ENCODE measurements at regions of chr11 and their contacts with region 1.

Region 1: DNA sequence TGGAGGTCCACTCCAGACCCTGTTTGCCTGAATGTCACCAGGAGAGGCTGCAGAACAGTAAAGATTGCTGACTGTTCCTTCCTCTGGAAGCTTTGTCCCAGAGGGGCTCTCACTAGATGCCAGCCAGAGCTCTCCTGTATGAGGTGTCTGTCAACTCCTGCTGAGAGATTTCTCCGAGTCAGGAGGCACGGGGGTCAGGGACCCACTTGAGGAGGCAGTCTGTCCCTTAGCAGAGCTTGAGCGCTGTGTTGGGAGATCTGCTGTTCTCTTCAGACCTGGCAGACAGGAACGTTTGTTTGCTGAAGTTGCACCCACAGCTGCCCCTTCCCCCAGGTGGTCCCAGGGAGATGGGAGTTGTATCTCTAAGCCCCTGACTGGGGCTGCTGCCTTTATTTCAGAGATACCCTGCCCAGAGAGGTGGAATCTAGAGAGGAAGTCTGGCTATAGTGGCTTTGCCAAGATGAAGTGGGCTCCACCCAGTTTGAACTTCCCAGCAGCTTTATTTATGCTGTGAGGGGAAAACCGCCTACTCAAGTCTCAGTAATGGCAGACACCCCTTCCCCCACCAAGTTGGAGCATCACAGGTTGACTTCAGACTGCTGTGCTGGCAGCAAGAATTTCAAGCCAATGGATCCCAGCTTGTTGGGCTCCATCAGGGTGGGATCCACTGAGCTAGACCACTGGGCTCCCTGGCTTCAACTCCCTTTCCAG is 99.4 kb downstream of the PDE3B start:
- DNase-seq: no peak
- ATAC-seq: no peak
- H3K4me3 ChIP-seq: no peak overlapping the region
- H3K27ac ChIP-seq: no peak overlapping the region
- H3K4me1 ChIP-seq: no peaks in the 10 kb centered on the region
- H3K27me3 ChIP-seq: no peaks in the 10 kb centered on the region
- CTCF ChIP-seq: no peak
- POLR2A ChIP-seq: no peak

Region 2: DNA sequence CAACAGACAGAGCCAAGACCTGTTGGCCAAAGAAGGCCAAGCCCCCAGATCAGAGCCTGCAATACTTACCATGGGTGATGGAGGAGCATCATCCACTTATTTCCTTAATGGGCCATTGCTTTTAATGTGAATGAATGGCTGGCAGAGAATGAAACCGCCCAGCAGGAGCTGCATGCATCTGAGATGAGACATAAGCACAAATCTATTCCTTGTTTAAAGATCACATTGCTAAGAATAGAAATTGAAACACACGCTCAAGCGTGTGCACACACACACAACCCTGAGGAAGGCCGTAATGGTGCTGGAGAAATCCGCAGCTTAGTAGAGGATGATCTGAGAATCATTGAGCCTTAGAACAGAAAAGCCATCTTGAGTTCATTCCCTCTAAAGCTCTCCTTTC is 378.7 kb before region 1 on chr11:
- intact Hi-C with region 1: no loop called
- DNase-seq: no peak
- ATAC-seq: peak; percentile 59 to 79 (median 72)
- H3K4me3 ChIP-seq: no peak overlapping the region
- H3K27ac ChIP-seq: peak overlapping the region in 6 of 12 donors; percentile 30 to 87 (median 66)
- H3K4me1 ChIP-seq: peaks cover 0 to 26% (median 9%) of the 10 kb centered on the region in 12 donors
- H3K27me3 ChIP-seq: no peaks in the 10 kb centered on the region
- CTCF ChIP-seq: no peak
- POLR2A ChIP-seq: no peak

Region 3: GRCh38 chr11:14756349-14756748 is 13.3 kb after region 1 on chr11:
- intact Hi-C with region 1: no loop called
- DNase-seq: no peak
- ATAC-seq: no peak
- H3K4me3 ChIP-seq: no peak overlapping the region
- H3K27ac ChIP-seq: no peak overlapping the region
- H3K4me1 ChIP-seq: peaks cover 0 to 7% (median 0%) of the 10 kb centered on the region in 12 donors
- H3K27me3 ChIP-seq: no peaks in the 10 kb centered on the region
- CTCF ChIP-seq: no peak
- POLR2A ChIP-seq: no peak

Region 4: DNA sequence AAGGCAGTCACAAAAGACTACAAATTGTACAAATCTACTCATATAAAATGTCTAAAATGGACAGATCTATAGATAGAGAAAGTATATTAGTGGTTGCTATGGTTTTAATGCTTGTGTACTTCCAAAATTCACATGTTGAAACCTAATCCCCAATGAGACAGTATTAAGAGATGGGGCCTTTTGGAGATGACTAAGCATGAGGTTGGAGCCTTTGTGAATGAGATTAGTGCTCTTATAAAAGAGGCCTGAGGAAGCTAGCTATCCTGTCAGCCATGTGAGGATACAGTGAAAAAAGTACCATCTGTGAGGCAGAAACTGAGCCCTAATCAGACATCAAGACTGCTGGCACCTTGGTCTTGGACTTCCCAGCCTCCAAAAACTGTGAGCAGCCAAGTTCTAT is 66.5 kb after region 1 on chr11:
- intact Hi-C with region 1: loop called in 1 of 10 experiments (anchors 5 kb)
- DNase-seq: no peak
- ATAC-seq: no peak
- H3K4me3 ChIP-seq: no peak overlapping the region
- H3K27ac ChIP-seq: no peak overlapping the region
- H3K4me1 ChIP-seq: no peaks in the 10 kb centered on the region
- H3K27me3 ChIP-seq: no peaks in the 10 kb centered on the region
- CTCF ChIP-seq: no peak
- POLR2A ChIP-seq: no peak

Region 5: DNA sequence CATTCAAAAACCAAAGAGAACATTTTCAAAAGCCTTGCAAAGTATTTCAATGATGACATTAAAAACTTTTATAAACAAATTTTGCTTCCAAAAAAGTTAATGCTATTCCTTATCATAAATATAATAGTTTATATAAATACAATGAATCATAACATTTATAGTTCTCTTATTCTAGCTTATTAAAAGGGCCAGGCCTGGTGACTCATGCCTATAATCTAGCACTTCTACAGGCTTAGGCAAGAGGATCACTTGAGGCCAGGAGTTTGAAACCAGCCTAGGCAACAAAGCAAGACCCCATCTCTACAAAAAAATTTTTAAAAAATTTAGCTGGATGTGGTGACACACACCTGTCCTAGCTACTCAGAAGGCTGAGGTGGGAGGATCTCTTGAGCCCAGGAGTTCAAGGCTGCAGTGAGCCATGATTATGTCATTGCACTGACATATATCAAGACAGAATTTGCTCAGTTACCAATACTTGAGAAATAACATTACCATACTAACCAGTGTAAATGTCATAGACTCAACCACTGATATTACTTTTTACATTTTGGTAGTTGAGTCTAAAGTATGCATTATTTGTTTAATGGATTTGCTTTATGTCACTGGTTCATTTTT is 92.6 kb after region 1 on chr11:
- intact Hi-C with region 1: no loop called
- DNase-seq: no peak
- ATAC-seq: no peak
- H3K4me3 ChIP-seq: no peak overlapping the region
- H3K27ac ChIP-seq: peak overlapping the region in 1 of 12 donors; percentile 40
- H3K4me1 ChIP-seq: no peaks in the 10 kb centered on the region
- H3K27me3 ChIP-seq: no peaks in the 10 kb centered on the region
- CTCF ChIP-seq: no peak
- POLR2A ChIP-seq: no peak

Region 6: DNA sequence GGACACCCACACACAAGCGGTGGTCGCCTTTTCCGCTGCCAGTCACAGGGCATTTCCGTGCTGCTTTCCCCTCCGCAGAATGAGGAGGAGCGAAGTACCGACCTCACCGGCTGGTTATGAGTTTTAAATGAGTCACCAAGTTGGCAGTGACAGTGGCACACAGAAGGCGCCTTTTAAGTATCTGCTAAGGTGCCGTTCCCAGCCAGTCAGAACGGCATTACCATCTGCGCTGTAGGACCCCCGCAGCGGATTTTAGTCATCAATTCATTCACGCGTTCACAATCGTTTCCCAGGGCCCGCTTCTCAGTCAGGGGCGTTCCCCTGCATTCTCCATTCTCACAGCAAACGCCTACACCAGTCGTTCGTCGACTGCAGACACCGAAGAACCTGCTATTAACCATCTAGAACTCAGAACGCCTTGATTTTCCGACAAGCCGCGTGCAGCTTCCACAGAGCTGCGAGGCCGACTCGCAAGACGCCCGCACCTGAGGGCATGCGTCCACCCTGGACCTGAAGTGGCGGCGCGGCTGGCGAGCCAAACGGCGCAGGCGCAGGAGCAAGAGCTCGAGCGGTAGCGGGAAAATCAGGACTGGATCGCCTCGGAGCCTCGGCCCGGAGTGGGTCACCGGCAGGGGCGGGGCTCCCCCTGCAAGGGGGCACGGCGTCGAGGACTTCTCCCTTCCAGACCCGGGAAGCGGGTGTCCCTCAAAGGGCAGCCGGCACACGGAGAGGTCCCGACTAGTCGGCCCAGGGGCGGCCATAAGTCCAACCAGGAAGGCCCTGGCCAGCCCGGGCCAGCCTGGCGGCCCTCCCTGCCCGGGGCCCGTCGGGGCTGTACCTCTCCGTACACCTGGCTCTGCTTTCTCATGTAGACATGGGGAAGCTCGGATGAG is 148.4 kb after region 1 on chr11:
- intact Hi-C with region 1: no loop called
- DNase-seq: peak; percentile 88 to 94 (median 91)
- ATAC-seq: peak; percentile 59 to 90 (median 88)
- H3K4me3 ChIP-seq: peak overlapping the region; percentile 64 to 92 (median 70)
- H3K27ac ChIP-seq: peak overlapping the region; percentile 40 to 96 (median 86)
- H3K4me1 ChIP-seq: peaks cover 0 to 28% (median 9%) of the 10 kb centered on the region in 12 donors
- H3K27me3 ChIP-seq: no peaks in the 10 kb centered on the region
- CTCF ChIP-seq: no peak
- POLR2A ChIP-seq: peak in 1 of 2 donors; percentile 31

Measured in heart left ventricle (tissue), 16 donors.